Activated naive CD4-positive, alpha-beta T cell treated with anti-CD3 and anti-CD28 coated beads for 36 hours (primary cell): ENCODE measurements at regions of chr11 and their contacts with region 1.

Region 1: GRCh38 chr11:58579192-58580129 is 598 bp downstream of the ZFP91 start:
- DNase-seq: peak; percentile 95
- H3K4me3 Mint-ChIP-seq: peak overlapping the region; percentile 100
- H3K27ac Mint-ChIP-seq: peak overlapping the region; percentile 99
- H3K4me1 Mint-ChIP-seq: peaks cover 53% of the 10 kb centered on the region
- H3K27me3 Mint-ChIP-seq: no peaks in the 10 kb centered on the region

Region 2: GRCh38 chr11:57530596-57531507 is 1048.6 kb before region 1 on chr11 and contains the start of gene TIMM10:
- CTCF ChIA-PET with region 1: no interaction called
- intact Hi-C with region 1: loop called (anchors 1 kb)
- DNase-seq: peak; percentile 97
- H3K4me3 Mint-ChIP-seq: peak within 1 kb of the TSS; percentile 90
- H3K27ac Mint-ChIP-seq: peak within 1 kb of the TSS; percentile 87
- H3K4me1 Mint-ChIP-seq: peaks cover 38% of the 10 kb centered on the region
- H3K27me3 Mint-ChIP-seq: no peaks in the 10 kb centered on the region
- total RNA-seq, gene TIMM10: 131 to 136 TPM

Region 3: GRCh38 chr11:57741132-57742086 is 838.1 kb before region 1 on chr11 and contains the start of gene SELENOH:
- CTCF ChIA-PET with region 1: no interaction called
- intact Hi-C with region 1: loop called (anchors 1 kb)
- DNase-seq: peak; percentile 98
- H3K4me3 Mint-ChIP-seq: peak within 1 kb of the TSS; percentile 97
- H3K27ac Mint-ChIP-seq: peak within 1 kb of the TSS; percentile 99
- H3K4me1 Mint-ChIP-seq: peaks cover 32% of the 10 kb centered on the region
- H3K27me3 Mint-ChIP-seq: no peaks in the 10 kb centered on the region
- total RNA-seq, gene SELENOH: 249 to 282 TPM

Region 4: DNA sequence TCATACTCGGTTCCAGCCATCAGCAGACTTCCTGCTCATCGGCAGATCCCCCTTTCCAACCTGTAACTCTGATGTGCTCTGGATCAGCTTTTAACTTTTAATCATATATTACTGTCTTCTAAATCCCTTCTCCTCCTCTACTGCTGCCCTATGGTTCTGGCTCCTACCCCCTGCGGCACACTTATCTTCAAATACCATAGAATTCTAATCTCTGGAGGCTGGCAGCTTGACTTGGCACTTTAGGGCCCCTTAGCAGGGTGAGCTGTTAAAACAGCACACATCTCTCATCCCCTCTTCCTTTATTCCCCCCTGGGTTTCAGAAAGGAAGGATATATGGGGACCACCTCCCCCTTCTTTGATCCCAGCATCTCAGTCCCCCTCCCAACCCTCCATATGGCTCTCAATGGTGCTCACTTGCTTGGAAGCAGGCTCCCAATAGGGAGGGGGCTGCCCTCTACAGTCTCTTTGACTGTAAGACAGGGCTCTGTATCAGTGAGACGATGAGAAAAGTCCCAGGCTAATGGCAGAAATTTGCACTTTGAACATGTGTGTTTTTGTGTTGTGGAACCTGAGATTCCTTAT is 38.6 kb after region 1 on chr11:
- CTCF ChIA-PET with region 1: interaction called, 7 read pairs
- intact Hi-C with region 1: loop called (anchors 1 kb)
- DNase-seq: peak; percentile 31
- H3K4me3 Mint-ChIP-seq: no peak overlapping the region
- H3K27ac Mint-ChIP-seq: peak overlapping the region; percentile 39
- H3K4me1 Mint-ChIP-seq: peaks cover 31% of the 10 kb centered on the region
- H3K27me3 Mint-ChIP-seq: no peaks in the 10 kb centered on the region

Region 5: GRCh38 chr11:58726737-58727414 is 147.4 kb after region 1 on chr11:
- CTCF ChIA-PET with region 1: no interaction called
- intact Hi-C with region 1: loop called (anchors 5 kb)
- DNase-seq: peak; percentile 13
- H3K4me3 Mint-ChIP-seq: no peak overlapping the region
- H3K27ac Mint-ChIP-seq: peak overlapping the region; percentile 50
- H3K4me1 Mint-ChIP-seq: peaks cover 44% of the 10 kb centered on the region
- H3K27me3 Mint-ChIP-seq: no peaks in the 10 kb centered on the region

Region 6: DNA sequence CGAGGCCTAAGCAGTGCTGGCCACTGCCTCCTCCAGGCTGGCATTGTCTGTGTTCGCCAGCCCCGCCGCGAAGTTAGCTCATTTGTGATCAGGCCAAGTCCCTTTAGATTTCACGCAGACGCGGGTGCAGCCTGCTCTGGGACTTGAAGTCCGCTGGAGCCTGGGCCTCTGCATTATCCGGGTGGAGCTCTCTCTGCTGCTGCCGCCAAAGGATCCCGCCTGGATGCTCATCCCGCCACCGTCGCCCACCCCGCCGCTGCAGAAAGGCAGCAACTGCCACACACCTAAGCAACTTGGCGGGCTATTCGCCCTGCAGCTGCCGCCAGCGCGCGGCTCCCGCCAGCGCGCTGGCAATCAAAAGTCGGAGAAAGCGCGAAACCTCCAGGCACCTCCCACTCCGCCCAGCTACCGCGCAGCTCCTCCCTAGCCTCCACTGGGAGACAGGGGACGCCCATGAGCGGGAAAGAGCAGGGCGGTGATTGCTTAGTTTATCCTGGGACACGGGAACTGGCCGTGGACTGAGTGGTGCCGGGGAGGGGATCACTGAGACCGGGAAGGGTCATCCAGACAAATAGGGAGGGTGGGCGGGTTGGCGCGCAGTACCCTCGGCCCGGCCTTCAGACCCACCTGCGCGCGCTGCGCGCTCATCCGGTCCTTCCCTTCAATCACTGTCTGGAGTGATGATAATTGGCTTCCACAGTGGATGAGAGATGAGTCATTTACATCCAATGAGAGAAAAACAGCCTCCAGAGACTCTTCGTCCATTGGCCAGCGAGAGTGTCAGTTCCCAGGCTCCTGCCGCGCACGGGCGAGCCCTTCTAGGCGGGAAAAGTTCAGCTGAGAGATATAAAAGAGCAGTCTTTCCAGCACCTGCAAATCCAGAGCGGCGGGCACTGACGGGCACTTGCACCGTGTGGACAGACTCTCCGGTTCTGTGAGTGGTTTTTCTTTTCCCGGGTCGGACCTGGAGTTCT is 527.2 kb after region 1 on chr11 and contains the start of gene FAM111B:
- CTCF ChIA-PET with region 1: no interaction called
- intact Hi-C with region 1: loop called (anchors 1 kb)
- DNase-seq: peak; percentile 88
- H3K4me3 Mint-ChIP-seq: peak within 1 kb of the TSS; percentile 87
- H3K27ac Mint-ChIP-seq: peak within 1 kb of the TSS; percentile 76
- H3K4me1 Mint-ChIP-seq: peaks cover 41% of the 10 kb centered on the region
- H3K27me3 Mint-ChIP-seq: peaks cover 61% of the 10 kb centered on the region
- total RNA-seq, gene FAM111B: 21.6 to 22.6 TPM

Region 7: GRCh38 chr11:59668950-59669610 is 1089.6 kb after region 1 on chr11 and contains the start of gene PATL1:
- CTCF ChIA-PET with region 1: no interaction called
- intact Hi-C with region 1: loop called (anchors 1 kb)
- DNase-seq: peak; percentile 99
- H3K4me3 Mint-ChIP-seq: peak within 1 kb of the TSS; percentile 87
- H3K27ac Mint-ChIP-seq: peak within 1 kb of the TSS; percentile 91
- H3K4me1 Mint-ChIP-seq: peaks cover 37% of the 10 kb centered on the region
- H3K27me3 Mint-ChIP-seq: no peaks in the 10 kb centered on the region
- total RNA-seq, gene PATL1: 56.7 to 56.8 TPM